ENCODE measurements at regions of chr5 and their contacts with region 1.

Region 1: DNA sequence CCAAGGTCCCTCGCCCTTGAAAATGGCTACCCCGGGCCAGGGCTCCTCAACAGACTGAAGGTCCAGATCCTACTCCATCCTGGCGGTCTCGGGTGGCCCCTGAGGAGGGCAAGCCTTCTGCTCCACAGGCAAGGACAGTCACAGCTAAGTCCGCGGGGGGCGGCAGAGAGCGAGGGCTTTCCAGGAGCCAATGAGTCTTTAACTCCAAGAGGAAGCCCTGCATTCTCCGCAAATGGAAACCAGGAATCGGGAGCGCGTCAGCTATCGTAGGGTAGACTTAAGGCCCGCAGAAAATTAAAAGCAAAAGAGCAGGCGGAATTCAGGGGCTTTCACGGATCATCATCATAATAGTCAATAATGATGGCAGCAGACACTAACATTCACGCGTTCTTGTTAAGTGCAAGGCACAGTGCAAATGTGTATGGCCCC is 87.8 kb upstream of the TNFAIP8 start:
- DNase-seq: peak; percentile 80 to 89
- ATAC-seq: peak; percentile 97 to 98
- H3K4me3 ChIP-seq: peak overlapping the region; percentile 68 to 96 (median 84)
- H3K27ac ChIP-seq: peak overlapping the region; percentile 81 to 88 (median 86)
- H3K4me1 ChIP-seq: peaks cover 4 to 5% of the 10 kb centered on the region in 2 donors
- H3K27me3 ChIP-seq: no peaks in the 10 kb centered on the region
- CTCF ChIP-seq: peak in 3 of 5 experiments; percentile 21 to 56 (median 55)
- POLR2A ChIP-seq: no peak

Region 2: GRCh38 chr5:119070828-119071572 is 197.0 kb before region 1 on chr5 and contains the start of gene DMXL1:
- in situ Hi-C with region 1: no loop called
- intact Hi-C with region 1: loop called (anchors 2 kb)
- DNase-seq: peak; percentile 99
- ATAC-seq: peak; percentile 95 to 97
- H3K4me3 ChIP-seq: peak within 1 kb of the TSS; percentile 73 to 91 (median 88)
- H3K27ac ChIP-seq: peak within 1 kb of the TSS; percentile 91 to 99 (median 96)
- H3K4me1 ChIP-seq: peaks cover 21 to 32% of the 10 kb centered on the region in 2 donors
- H3K27me3 ChIP-seq: no peaks in the 10 kb centered on the region
- CTCF ChIP-seq: peak in 1 of 5 experiments; percentile 25
- POLR2A ChIP-seq: peak; percentile 76 to 83
- total RNA-seq, gene DMXL1: 17.8 to 31.1 (median 24.3) TPM

Region 3: DNA sequence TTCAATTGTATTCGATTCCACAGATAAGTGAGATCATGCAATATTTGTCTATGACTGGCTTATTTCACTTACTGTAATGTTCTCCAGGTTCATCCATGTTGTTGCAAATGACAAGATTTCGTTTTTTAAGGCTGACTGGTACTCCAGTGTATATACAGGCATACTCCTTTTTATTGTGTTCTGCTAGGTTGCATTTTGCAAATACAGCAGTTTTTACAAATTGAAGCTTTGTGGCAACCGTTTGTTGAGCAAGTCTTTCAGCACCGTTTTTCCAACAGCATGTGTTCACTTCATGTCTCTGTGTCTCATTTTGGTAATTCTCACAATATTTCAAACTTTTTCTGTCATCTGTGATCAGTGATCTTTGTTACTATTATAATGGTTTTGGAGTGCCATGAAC is 114.3 kb before region 1 on chr5:
- in situ Hi-C with region 1: no loop called
- intact Hi-C with region 1: no loop called
- DNase-seq: no peak
- ATAC-seq: no peak
- H3K4me3 ChIP-seq: no peak overlapping the region
- H3K27ac ChIP-seq: no peak overlapping the region
- H3K4me1 ChIP-seq: no peaks in the 10 kb centered on the region
- H3K27me3 ChIP-seq: no peaks in the 10 kb centered on the region
- CTCF ChIP-seq: no peak
- POLR2A ChIP-seq: no peak

Region 4: DNA sequence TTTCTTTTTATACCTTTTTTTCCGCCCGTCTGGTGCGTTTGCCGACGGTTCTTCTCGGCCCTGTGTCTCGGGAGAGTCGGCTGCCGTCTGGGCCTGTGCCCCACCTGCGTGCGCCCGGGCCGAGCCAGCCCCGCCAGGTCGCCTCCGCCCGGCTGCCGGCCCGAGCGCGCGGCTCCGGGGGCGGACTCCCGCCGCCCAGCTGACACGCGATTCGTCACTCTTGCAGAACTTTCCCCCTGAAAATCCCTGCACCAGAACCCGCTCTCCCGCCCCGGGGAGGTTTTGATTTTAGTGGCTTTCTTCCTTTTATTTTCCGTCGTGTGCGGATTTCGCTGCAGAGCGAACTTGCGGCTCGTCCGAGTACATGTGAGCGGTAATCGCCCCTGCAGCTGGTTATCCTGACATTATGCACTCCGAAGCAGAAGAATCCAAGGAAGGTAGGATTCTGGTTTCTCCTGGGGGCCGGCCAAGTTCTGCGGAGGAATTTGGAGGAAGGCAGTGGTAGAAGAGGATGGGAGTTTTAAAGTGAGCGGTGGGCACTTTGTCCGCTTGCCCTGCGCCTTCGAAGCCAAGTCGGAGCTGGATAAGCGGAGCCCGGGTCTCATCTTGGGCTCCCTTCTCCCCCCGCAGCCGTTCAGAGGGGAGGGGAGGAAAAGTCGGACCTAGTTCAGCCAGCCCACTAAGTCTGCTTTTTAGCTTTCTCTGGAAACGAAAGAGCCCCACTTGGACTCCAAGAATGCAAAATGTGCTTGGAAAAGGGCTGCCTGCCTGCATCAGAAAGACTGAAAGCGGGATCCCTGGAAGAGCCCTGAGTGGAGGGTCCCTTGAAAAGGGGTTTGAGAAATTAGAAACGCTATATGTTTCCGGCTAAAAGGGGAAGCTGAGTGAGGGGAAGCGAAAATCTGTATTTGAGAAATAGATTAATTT is 88.0 kb after region 1 on chr5 and contains the start of gene TNFAIP8:
- in situ Hi-C with region 1: no loop called
- intact Hi-C with region 1: loop called (anchors 5 kb)
- DNase-seq: peak in 1 of 2 donors; percentile 25
- ATAC-seq: peak; percentile 46 to 65
- H3K4me3 ChIP-seq: peak within 1 kb of the TSS; percentile 56 to 70 (median 60)
- H3K27ac ChIP-seq: peak within 1 kb of the TSS in 2 of 4 donors; percentile 1 to 26
- H3K4me1 ChIP-seq: no peaks in the 10 kb centered on the region
- H3K27me3 ChIP-seq: peaks cover 6 to 33% (median 18%) of the 10 kb centered on the region in 3 donors
- CTCF ChIP-seq: no peak
- POLR2A ChIP-seq: no peak
- total RNA-seq, gene TNFAIP8: 0.20 to 5.8 (median 2.0) TPM

Region 5: GRCh38 chr5:119411935-119412602 is 144.1 kb after region 1 on chr5:
- in situ Hi-C with region 1: no loop called
- intact Hi-C with region 1: loop called (anchors 5 kb)
- DNase-seq: peak; percentile 7 to 29
- ATAC-seq: peak; percentile 91 to 99
- H3K4me3 ChIP-seq: peak overlapping the region; percentile 59 to 67 (median 62)
- H3K27ac ChIP-seq: peak overlapping the region in 2 of 4 donors; percentile 10 to 38
- H3K4me1 ChIP-seq: peaks cover 0 to 5% of the 10 kb centered on the region in 2 donors
- H3K27me3 ChIP-seq: no peaks in the 10 kb centered on the region
- CTCF ChIP-seq: peak; percentile 82 to 93 (median 83)
- POLR2A ChIP-seq: no peak

Region 6: GRCh38 chr5:119515192-119515591 is 247.2 kb after region 1 on chr5:
- in situ Hi-C with region 1: no loop called
- intact Hi-C with region 1: no loop called
- DNase-seq: no peak
- ATAC-seq: no peak
- H3K4me3 ChIP-seq: no peak overlapping the region
- H3K27ac ChIP-seq: no peak overlapping the region
- H3K4me1 ChIP-seq: no peaks in the 10 kb centered on the region
- H3K27me3 ChIP-seq: no peaks in the 10 kb centered on the region
- CTCF ChIP-seq: no peak
- POLR2A ChIP-seq: no peak

Measured in gastrocnemius medialis (tissue), 4 donors.